Ovary (tissue), 10 donors: ENCODE measurements at regions of chr1 and their contacts with region 1.

Region 1: GRCh38 chr1:236523701-236524141 is at the start of gene LGALS8:
- DNase-seq: peak; percentile 86 to 92 (median 89)
- H3K4me3 ChIP-seq: peak within 1 kb of the TSS; percentile 69
- H3K27ac ChIP-seq: peak within 1 kb of the TSS; percentile 80 to 88
- H3K4me1 ChIP-seq: peaks cover 1% of the 10 kb centered on the region
- H3K27me3 ChIP-seq: no peaks in the 10 kb centered on the region
- CTCF ChIP-seq: no peak
- EP300 ChIP-seq: peak; percentile 66
- POLR2A ChIP-seq: peak; percentile 47
- total RNA-seq, gene LGALS8: 36.4 to 91.2 (median 44.5) TPM

Region 2: DNA sequence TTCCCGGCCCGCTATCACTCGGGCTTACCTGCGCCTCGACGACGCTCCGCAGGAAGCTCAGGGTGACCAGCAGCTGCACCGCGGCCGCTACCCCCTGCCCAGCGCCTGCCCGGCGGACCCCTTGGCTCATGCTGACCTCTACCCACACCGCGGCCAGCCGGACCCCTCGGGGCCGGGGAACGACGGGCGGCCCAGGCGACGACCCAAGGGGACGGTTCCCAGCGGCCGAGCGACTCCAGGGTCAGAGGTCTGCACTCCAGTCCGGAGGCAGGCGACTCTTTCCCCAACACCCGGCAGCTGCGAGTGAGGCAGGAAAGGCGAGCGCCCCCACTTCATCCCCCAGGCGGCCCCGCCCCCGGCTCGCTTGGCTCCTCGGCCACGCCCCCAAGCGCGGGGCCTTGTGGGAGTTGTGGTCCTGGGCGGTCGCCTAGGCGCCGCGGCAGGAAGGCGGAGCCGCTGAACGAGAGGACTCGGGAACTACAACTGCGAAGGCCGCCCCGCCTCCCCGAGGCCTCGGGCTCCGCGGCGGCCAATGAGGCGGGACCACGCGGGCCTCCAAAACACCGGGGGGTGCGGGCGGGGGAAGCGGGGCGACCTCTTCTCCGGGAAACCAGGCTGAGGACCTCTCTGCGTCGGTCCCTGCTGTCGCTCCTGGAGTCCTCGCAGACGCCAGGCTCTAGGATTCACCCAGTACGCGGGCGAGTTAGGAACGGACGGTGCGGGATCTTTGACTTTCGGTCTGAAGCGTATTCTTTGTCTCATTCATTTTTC is 241.9 kb before region 1 on chr1 and contains the start of gene ERO1B:
- intact Hi-C with region 1: loop called in 1 of 4 experiments (anchors 10 kb)
- DNase-seq: peak; percentile 96 to 98 (median 98)
- H3K4me3 ChIP-seq: peak within 1 kb of the TSS; percentile 99
- H3K27ac ChIP-seq: peak within 1 kb of the TSS; percentile 33 to 43
- H3K4me1 ChIP-seq: peaks cover 1% of the 10 kb centered on the region
- H3K27me3 ChIP-seq: no peaks in the 10 kb centered on the region
- CTCF ChIP-seq: peak in 2 of 3 donors; percentile 19 to 25
- EP300 ChIP-seq: no peak
- POLR2A ChIP-seq: peak; percentile 91
- total RNA-seq, gene ERO1B: 5.1 to 15.4 (median 5.8) TPM

Region 3: DNA sequence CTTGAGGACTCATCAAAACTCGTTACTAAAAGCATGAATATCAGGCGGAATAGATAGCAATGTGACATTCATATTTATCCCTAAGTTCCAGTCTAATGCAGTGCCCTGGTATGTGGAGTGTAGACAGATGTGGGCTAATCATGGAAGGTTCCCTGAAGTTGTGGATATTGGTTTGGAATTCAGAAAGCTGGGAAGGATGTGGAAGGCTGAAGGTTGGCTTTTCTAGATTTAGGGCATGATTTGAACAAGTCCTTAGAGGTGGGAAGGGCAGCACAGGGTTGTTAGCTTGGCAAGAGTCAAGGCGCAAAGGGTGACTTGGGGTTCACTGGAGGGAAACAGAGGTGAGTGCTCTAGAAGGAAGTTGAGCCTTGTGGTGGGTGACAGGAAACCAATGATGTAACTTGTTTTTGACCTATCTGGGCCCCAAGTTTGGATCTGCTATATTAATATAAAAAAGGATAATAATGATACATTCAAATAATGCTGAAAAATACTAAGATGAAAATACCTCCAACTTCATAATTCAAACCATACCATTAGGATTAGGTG is 22.0 kb after region 1 on chr1:
- intact Hi-C with region 1: no loop called
- DNase-seq: no peak
- H3K4me3 ChIP-seq: no peak overlapping the region
- H3K27ac ChIP-seq: no peak overlapping the region
- H3K4me1 ChIP-seq: no peaks in the 10 kb centered on the region
- H3K27me3 ChIP-seq: no peaks in the 10 kb centered on the region
- CTCF ChIP-seq: no peak
- EP300 ChIP-seq: no peak
- POLR2A ChIP-seq: no peak

Region 4: DNA sequence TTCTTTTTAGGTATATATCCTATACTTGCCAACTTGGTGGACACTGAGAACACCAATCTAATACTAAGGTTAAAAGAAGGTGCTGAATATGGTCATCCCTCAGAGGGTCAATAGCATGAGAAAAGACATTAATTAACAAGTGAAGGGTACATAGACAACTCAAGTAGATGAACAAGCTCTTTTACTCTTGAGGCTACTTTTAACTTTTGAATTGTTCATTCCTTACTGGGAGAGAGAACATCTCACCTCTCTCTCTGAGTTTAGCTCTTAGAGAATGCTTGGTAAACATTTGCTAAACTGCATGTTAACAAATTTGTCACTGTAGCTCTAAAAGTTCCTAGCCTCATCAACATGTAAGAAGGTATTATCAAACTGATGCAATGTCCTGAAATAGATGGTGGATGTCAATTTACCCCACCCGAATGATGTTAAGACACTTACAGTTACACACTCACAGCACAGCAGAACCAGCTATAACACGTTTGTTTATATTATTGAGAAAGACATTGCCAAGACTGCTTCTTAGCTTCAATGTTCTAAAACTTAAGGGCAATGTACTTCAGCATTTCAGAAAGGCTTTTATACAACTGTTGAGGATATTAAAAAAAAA is 44.7 kb after region 1 on chr1:
- intact Hi-C with region 1: no loop called
- DNase-seq: no peak
- H3K4me3 ChIP-seq: no peak overlapping the region
- H3K27ac ChIP-seq: no peak overlapping the region
- H3K4me1 ChIP-seq: no peaks in the 10 kb centered on the region
- H3K27me3 ChIP-seq: no peaks in the 10 kb centered on the region
- CTCF ChIP-seq: no peak
- EP300 ChIP-seq: no peak
- POLR2A ChIP-seq: no peak